Mammary epithelial cell (primary cell): ENCODE measurements at regions of chr19 and their contacts with region 1.

Region 1: GRCh38 chr19:44912854-44913253 is 1.6 kb upstream of the APOC1 start:
- DNase-seq: no peak
- H3K4me3 ChIP-seq: no peak overlapping the region
- H3K27ac ChIP-seq: no peak overlapping the region
- H3K4me1 ChIP-seq: peaks cover 10% of the 10 kb centered on the region
- H3K27me3 ChIP-seq: no peaks in the 10 kb centered on the region
- CTCF ChIP-seq: no peak

Region 2: DNA sequence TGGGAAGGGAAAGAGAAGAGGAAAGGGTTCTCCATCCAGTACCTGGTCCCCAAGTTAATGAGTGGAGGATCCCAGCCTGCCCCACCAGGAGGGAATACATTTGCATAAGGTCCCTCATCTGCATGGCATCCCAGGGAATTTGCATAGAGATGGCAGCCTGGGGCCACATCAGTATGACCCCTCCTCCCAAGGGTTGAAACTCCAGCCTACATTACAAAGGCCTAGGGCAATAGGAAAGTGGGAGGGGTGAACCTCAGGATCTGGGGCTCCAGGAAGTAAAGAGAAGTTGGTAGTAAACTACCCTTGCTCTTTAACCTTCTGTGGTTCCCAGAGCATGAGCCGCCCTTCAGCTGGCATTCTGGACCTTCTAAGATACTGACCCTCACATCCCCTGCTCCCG is 73.6 kb before region 1 on chr19:
- CTCF ChIA-PET with region 1: no interaction called
- dilution Hi-C with region 1: loop called (anchors 5 kb)
- in situ Hi-C with region 1: no loop called
- intact Hi-C with region 1: no loop called
- DNase-seq: no peak
- H3K4me3 ChIP-seq: no peak overlapping the region
- H3K27ac ChIP-seq: no peak overlapping the region
- H3K4me1 ChIP-seq: no peaks in the 10 kb centered on the region
- H3K27me3 ChIP-seq: no peaks in the 10 kb centered on the region
- CTCF ChIP-seq: no peak

Region 3: DNA sequence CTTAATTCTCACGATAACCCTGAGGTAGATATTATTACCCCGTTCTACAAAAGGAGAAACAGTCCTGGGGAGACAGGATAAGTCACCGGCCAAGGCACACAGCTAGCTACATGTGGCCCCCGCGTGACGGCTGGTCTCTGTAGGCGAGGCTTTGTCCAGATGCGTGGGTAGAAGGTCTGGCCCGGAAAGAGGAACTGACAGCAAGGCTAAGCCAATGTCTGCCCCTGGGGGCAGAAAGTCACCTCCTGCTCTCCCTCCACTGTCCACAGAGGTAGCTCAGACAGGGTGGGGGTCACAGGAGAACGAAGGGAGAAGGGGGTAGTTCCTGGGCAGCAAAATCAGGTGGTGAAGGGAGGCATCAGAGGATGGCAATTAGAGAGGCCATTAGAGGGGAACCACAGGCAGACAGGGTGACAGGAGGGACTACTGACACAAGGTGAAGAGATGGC is 31.0 kb after region 1 on chr19:
- CTCF ChIA-PET with region 1: no interaction called
- dilution Hi-C with region 1: no loop called
- in situ Hi-C with region 1: no loop called
- intact Hi-C with region 1: loop called (anchors 2 kb)
- DNase-seq: peak; percentile 14
- H3K4me3 ChIP-seq: no peak overlapping the region
- H3K27ac ChIP-seq: no peak overlapping the region
- H3K4me1 ChIP-seq: peaks cover 8% of the 10 kb centered on the region
- H3K27me3 ChIP-seq: no peaks in the 10 kb centered on the region
- CTCF ChIP-seq: no peak

Region 4: DNA sequence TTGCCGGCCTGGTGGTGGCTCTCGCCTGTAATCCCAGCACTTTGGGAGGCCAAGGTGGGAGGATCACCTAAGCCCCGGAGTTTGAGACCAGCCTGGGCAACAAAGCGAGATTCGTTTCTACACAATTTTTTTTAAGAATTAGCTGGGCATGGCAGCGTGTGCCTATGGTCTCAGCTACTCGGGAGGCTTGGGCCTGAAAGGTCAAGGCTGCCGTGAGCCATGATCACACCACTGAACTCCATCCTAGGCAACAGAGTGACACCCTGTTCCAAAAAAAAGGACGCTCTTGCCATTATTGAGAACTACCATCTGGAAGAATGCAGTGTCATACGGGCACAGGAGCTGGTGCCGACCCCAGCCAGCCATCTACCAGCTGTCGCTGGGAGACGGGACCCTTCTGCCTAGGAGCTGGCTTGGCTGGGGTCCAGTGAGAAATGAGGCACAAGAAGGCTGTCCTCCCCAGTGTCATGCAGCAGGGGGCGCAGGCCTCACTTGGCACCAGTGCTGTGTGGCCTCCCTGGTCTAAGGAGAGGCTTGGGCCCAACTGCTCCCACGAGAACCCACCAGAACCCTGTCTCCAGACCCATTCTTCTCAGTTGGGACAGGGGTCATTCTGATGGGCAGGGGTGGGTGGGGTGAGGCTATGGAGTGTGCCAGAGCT is 76.2 kb after region 1 on chr19:
- CTCF ChIA-PET with region 1: no interaction called
- dilution Hi-C with region 1: no loop called
- in situ Hi-C with region 1: no loop called
- intact Hi-C with region 1: loop called (anchors 1 kb)
- DNase-seq: peak; percentile 35
- H3K4me3 ChIP-seq: no peak overlapping the region
- H3K27ac ChIP-seq: no peak overlapping the region
- H3K4me1 ChIP-seq: no peaks in the 10 kb centered on the region
- H3K27me3 ChIP-seq: no peaks in the 10 kb centered on the region
- CTCF ChIP-seq: peak; percentile 75 to 79

Region 5: GRCh38 chr19:45038931-45039893 is 126.4 kb after region 1 on chr19 and contains the start of gene CLASRP:
- CTCF ChIA-PET with region 1: no interaction called
- dilution Hi-C with region 1: loop called (anchors 5 kb)
- in situ Hi-C with region 1: no loop called
- intact Hi-C with region 1: no loop called
- DNase-seq: peak; percentile 83
- H3K4me3 ChIP-seq: peak within 1 kb of the TSS; percentile 80 to 99 (median 98)
- H3K27ac ChIP-seq: peak within 1 kb of the TSS; percentile 92
- H3K4me1 ChIP-seq: peaks cover 11% of the 10 kb centered on the region
- H3K27me3 ChIP-seq: no peaks in the 10 kb centered on the region
- CTCF ChIP-seq: no peak
- total RNA-seq, gene CLASRP: 19.5 to 69.5 TPM